ENCODE measurements at regions of chr2 and their contacts with region 1.

Region 1: GRCh38 chr2:8215159-8215863 is 466.5 kb upstream of the ID2 start:
- DNase-seq: no peak
- ATAC-seq: no peak

Region 2: GRCh38 chr2:8148260-8149008 is 66.9 kb before region 1 on chr2:
- intact Hi-C with region 1: loop called (anchors 10 kb)
- DNase-seq: no peak
- ATAC-seq: no peak

Region 3: GRCh38 chr2:8378016-8378810 is 162.9 kb after region 1 on chr2:
- intact Hi-C with region 1: no loop called
- DNase-seq: no peak
- ATAC-seq: no peak

Measured in Right ventricle myocardium inferior (tissue), 1 donor.